Endothelial cell of umbilical vein (primary cell): ENCODE measurements at regions of chr10 and their contacts with region 1.

Region 1: DNA sequence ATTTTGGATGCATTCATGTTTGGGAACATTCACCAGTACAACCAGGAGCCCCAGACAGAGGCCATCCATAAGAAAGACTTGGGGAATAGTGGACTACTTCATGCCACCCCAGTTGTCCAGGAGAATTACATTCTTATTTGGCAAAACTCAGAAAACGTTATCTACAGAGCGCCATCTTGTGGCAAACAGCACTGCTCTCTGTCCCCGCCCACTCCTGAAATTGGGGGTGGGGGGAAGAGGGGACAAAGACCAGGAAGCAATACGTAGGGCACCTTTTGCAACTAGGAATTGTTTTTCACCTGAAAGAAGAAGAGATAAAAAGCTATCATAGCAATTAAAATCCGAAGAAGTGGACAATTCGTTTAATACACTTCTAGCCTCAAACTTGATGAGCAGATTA is 134.6 kb upstream of the MGMT start:
- DNase-seq: peak; percentile 62
- H3K4me3 ChIP-seq: no peak overlapping the region
- H3K27ac ChIP-seq: no peak overlapping the region
- H3K4me1 ChIP-seq: peaks cover 13% of the 10 kb centered on the region
- H3K27me3 ChIP-seq: peaks cover 5 to 11% of the 10 kb centered on the region in 2 experiments
- CTCF ChIP-seq: peak; percentile 70 to 72
- POLR2A ChIP-seq: no peak

Region 2: DNA sequence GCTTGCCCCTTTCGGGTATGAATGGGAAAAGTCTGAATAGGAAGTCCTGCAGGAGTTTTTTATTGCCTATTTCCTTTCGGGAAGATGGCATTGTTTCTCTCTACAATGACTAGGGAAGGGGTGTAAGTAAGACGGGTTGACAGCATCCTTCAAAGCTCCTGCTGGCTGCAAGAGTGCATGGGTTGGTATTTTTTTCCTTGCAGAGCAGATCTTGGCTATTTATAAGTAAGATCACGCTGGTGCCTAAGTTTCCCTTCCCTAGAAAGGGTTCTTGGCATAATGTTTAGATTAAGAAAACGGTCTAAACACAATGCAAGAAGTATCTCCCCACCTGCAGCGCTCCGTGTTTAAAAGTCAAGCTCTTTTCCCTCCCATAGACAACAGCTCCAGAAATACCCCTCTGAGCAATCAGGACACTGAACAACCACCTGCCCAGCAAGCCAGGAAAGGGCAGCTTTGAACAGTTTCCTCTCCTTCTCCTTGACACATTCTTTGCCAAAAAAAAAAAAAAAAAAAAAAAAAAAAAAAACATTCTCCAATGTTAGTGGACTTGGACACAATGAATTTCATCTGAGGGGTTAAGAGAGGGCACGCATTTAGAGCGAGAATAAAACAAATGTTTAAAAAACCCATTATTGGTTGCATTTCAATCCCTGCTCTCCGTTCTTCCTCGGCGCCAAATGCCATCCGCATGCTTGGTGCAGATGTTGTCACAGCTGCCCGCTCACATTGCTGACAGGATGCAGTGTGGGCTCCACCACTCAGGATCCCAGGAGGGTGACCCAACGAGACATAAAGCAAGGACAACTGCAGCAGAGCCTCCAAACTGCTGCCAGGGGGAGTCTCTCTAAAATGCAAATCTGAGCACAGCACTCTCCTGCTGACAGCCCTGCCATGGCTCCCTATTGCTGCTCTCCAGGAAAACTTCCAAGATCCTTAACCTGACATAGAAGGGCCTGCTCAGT is 292.8 kb before region 1 on chr10:
- CTCF ChIA-PET with region 1: interaction called, 98 read pairs
- POLR2A ChIA-PET with region 1: no interaction called
- dilution Hi-C with region 1: no loop called
- intact Hi-C with region 1: loop called (anchors 1 kb)
- DNase-seq: peak; percentile 71
- H3K4me3 ChIP-seq: peak overlapping the region in 1 of 3 experiments; percentile 19
- H3K27ac ChIP-seq: peak overlapping the region; percentile 48
- H3K4me1 ChIP-seq: peaks cover 65% of the 10 kb centered on the region
- H3K27me3 ChIP-seq: no peaks in the 10 kb centered on the region
- CTCF ChIP-seq: peak in 1 of 2 donors; percentile 8
- POLR2A ChIP-seq: no peak

Region 3: GRCh38 chr10:129258283-129258923 is 74.1 kb before region 1 on chr10:
- CTCF ChIA-PET with region 1: interaction called, 6 read pairs
- POLR2A ChIA-PET with region 1: no interaction called
- dilution Hi-C with region 1: no loop called
- intact Hi-C with region 1: loop called (anchors 2 kb)
- DNase-seq: peak; percentile 82
- H3K4me3 ChIP-seq: peak overlapping the region in 1 of 3 experiments; percentile 19
- H3K27ac ChIP-seq: peak overlapping the region; percentile 30
- H3K4me1 ChIP-seq: peaks cover 17% of the 10 kb centered on the region
- H3K27me3 ChIP-seq: no peaks in the 10 kb centered on the region
- CTCF ChIP-seq: no peak
- POLR2A ChIP-seq: no peak

Region 4: GRCh38 chr10:129386415-129387257 is 54.2 kb after region 1 on chr10:
- CTCF ChIA-PET with region 1: no interaction called
- POLR2A ChIA-PET with region 1: no interaction called
- dilution Hi-C with region 1: no loop called
- intact Hi-C with region 1: no loop called
- DNase-seq: peak; percentile 2
- H3K4me3 ChIP-seq: no peak overlapping the region
- H3K27ac ChIP-seq: no peak overlapping the region
- H3K4me1 ChIP-seq: no peaks in the 10 kb centered on the region
- H3K27me3 ChIP-seq: no peaks in the 10 kb centered on the region
- CTCF ChIP-seq: no peak
- POLR2A ChIP-seq: no peak

Region 5: DNA sequence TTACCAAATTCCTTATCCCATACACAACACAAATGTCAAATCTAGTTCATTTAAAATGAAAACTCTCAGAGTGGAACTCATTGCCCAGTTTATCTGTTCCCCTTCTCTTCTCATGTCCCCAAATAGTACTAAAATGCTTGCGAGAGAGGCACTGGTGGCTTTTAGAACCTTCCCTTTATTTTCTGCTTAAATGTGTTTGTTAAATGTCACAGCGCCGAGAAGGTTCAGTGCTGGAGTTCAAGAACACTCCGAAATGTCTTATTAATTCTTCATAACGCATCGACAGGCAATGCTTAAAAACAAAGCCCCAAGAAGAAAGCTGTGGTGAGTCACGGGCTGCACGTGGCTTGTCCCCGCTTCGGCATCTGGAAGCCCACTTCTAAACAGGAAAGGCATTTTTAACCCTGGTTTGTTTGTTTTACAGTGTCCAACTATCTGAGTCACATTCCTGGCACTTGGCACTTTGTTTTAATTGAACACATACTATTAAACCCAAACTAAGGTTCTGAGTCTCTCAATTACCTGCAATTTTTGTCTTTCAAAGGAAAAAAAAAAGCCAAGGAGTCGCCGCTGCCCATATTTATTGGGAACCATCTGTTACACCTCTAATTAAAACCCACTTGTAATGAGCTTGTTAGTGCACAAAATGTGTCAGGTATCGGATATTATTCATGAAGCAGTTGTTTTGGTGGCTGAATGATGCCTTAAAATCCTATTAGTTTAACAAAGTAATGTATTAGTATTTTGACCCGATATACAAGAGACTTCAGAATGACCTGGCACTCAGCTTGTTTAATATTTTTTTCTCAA is 84.7 kb after region 1 on chr10:
- CTCF ChIA-PET with region 1: no interaction called
- POLR2A ChIA-PET with region 1: no interaction called
- dilution Hi-C with region 1: no loop called
- intact Hi-C with region 1: loop called (anchors 2 kb)
- DNase-seq: peak; percentile 59
- H3K4me3 ChIP-seq: no peak overlapping the region
- H3K27ac ChIP-seq: peak overlapping the region; percentile 62
- H3K4me1 ChIP-seq: peaks cover 17% of the 10 kb centered on the region
- H3K27me3 ChIP-seq: no peaks in the 10 kb centered on the region
- CTCF ChIP-seq: no peak
- POLR2A ChIP-seq: no peak

Region 6: GRCh38 chr10:129971381-129972144 is 639.1 kb after region 1 on chr10:
- CTCF ChIA-PET with region 1: no interaction called
- POLR2A ChIA-PET with region 1: no interaction called
- dilution Hi-C with region 1: no loop called
- intact Hi-C with region 1: loop called (anchors 5 kb)
- DNase-seq: peak; percentile 35
- H3K4me3 ChIP-seq: no peak overlapping the region
- H3K27ac ChIP-seq: no peak overlapping the region
- H3K4me1 ChIP-seq: no peaks in the 10 kb centered on the region
- H3K27me3 ChIP-seq: peaks cover 57 to 73% of the 10 kb centered on the region in 2 experiments
- CTCF ChIP-seq: peak; percentile 41 to 50
- POLR2A ChIP-seq: no peak